K562 (cell line): ENCODE measurements at regions of chr1 and their contacts with region 1.

Region 1: GRCh38 chr1:182301467-182302198 is 90.0 kb downstream of the GLUL start:
- DNase-seq: peak; percentile 53 to 87 (median 62)
- ATAC-seq: peak; percentile 76
- H3K4me3 ChIP-seq: no peak overlapping the region
- H3K27ac ChIP-seq: peak overlapping the region; percentile 95
- H3K4me1 ChIP-seq: peaks cover 37 to 61% of the 10 kb centered on the region in 2 experiments
- H3K27me3 ChIP-seq: no peaks in the 10 kb centered on the region
- CTCF ChIP-seq: peak; percentile 62 to 85 (median 65)
- EP300 ChIP-seq: peak; percentile 69
- POLR2A ChIP-seq: no peak
- RAD21 ChIP-seq: peak; percentile 93 to 98

Region 2: DNA sequence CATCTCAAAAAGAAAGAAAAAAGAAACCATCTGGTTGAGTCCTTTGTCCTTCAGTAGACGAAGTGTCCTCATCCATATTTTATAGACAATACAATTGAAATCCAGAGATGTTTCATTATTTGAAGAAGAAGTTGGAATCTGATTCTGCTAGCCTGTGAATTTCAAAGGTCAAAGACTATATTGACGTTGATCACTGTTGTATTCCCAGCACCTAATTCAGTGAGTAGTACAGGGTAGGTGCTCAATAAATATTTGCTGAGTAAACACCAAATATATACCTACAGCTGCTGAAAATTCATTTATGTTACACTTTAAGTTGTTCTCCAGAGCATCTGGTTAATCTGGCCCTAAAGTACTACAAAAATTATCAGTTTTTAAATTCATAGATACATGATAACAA is 683.1 kb before region 1 on chr1:
- CTCF ChIA-PET with region 1: no interaction called
- POLR2A ChIA-PET with region 1: no interaction called
- in situ Hi-C with region 1: no loop called
- intact Hi-C with region 1: no loop called
- DNase-seq: no peak
- ATAC-seq: no peak
- H3K4me3 ChIP-seq: no peak overlapping the region
- H3K27ac ChIP-seq: no peak overlapping the region
- H3K4me1 ChIP-seq: no peaks in the 10 kb centered on the region
- H3K27me3 ChIP-seq: no peaks in the 10 kb centered on the region; a peak in 1 of 5 replicates
- CTCF ChIP-seq: no peak
- EP300 ChIP-seq: no peak
- POLR2A ChIP-seq: no peak
- RAD21 ChIP-seq: no peak

Region 3: GRCh38 chr1:182175361-182175931 is 126.2 kb before region 1 on chr1:
- CTCF ChIA-PET with region 1: no interaction called
- POLR2A ChIA-PET with region 1: no interaction called
- in situ Hi-C with region 1: no loop called
- intact Hi-C with region 1: no loop called
- DNase-seq: no peak
- ATAC-seq: peak; percentile 25
- H3K4me3 ChIP-seq: no peak overlapping the region
- H3K27ac ChIP-seq: no peak overlapping the region
- H3K4me1 ChIP-seq: peaks cover 0 to 13% of the 10 kb centered on the region in 2 experiments; a peak in 3 of 5 replicates
- H3K27me3 ChIP-seq: peaks cover 4 to 10% of the 10 kb centered on the region in 2 experiments; a peak in 2 of 5 replicates
- CTCF ChIP-seq: no peak
- EP300 ChIP-seq: no peak
- POLR2A ChIP-seq: no peak
- RAD21 ChIP-seq: no peak

Region 4: GRCh38 chr1:182198049-182198501 is 103.6 kb before region 1 on chr1:
- CTCF ChIA-PET with region 1: no interaction called
- POLR2A ChIA-PET with region 1: no interaction called
- in situ Hi-C with region 1: no loop called
- intact Hi-C with region 1: loop called (anchors 1 kb)
- DNase-seq: peak in 3 of 4 experiments; percentile 32 to 49 (median 48)
- ATAC-seq: peak; percentile 78
- H3K4me3 ChIP-seq: no peak overlapping the region
- H3K27ac ChIP-seq: no peak overlapping the region
- H3K4me1 ChIP-seq: peaks cover 0 to 11% of the 10 kb centered on the region in 2 experiments; a peak in 3 of 5 replicates
- H3K27me3 ChIP-seq: no peaks in the 10 kb centered on the region
- CTCF ChIP-seq: peak; percentile 57 to 80 (median 67)
- EP300 ChIP-seq: no peak
- POLR2A ChIP-seq: no peak
- RAD21 ChIP-seq: peak; percentile 60 to 84

Region 5: GRCh38 chr1:182257369-182258063 is 44.1 kb before region 1 on chr1:
- CTCF ChIA-PET with region 1: no interaction called
- POLR2A ChIA-PET with region 1: interaction called, 4 read pairs
- in situ Hi-C with region 1: no loop called
- intact Hi-C with region 1: loop called (anchors 2 kb)
- DNase-seq: peak; percentile 79 to 95 (median 86)
- ATAC-seq: peak; percentile 93
- H3K4me3 ChIP-seq: no peak overlapping the region
- H3K27ac ChIP-seq: peak overlapping the region; percentile 83
- H3K4me1 ChIP-seq: peaks cover 37 to 47% of the 10 kb centered on the region in 2 experiments
- H3K27me3 ChIP-seq: no peaks in the 10 kb centered on the region
- CTCF ChIP-seq: peak in 1 of 3 experiments; percentile 22; a peak in 2 of 6 replicates
- EP300 ChIP-seq: peak; percentile 94
- POLR2A ChIP-seq: no peak
- RAD21 ChIP-seq: peak; percentile 30 to 33; a peak in 3 of 4 replicates

Region 6: GRCh38 chr1:182317611-182318161 is 16.1 kb after region 1 on chr1:
- CTCF ChIA-PET with region 1: no interaction called
- POLR2A ChIA-PET with region 1: interaction called, 10 read pairs
- in situ Hi-C with region 1: no loop called
- intact Hi-C with region 1: no loop called
- DNase-seq: no peak
- ATAC-seq: no peak
- H3K4me3 ChIP-seq: no peak overlapping the region
- H3K27ac ChIP-seq: no peak overlapping the region
- H3K4me1 ChIP-seq: peaks cover 13 to 21% of the 10 kb centered on the region in 2 experiments
- H3K27me3 ChIP-seq: no peaks in the 10 kb centered on the region
- CTCF ChIP-seq: no peak
- EP300 ChIP-seq: no peak
- POLR2A ChIP-seq: no peak
- RAD21 ChIP-seq: no peak

Region 7: DNA sequence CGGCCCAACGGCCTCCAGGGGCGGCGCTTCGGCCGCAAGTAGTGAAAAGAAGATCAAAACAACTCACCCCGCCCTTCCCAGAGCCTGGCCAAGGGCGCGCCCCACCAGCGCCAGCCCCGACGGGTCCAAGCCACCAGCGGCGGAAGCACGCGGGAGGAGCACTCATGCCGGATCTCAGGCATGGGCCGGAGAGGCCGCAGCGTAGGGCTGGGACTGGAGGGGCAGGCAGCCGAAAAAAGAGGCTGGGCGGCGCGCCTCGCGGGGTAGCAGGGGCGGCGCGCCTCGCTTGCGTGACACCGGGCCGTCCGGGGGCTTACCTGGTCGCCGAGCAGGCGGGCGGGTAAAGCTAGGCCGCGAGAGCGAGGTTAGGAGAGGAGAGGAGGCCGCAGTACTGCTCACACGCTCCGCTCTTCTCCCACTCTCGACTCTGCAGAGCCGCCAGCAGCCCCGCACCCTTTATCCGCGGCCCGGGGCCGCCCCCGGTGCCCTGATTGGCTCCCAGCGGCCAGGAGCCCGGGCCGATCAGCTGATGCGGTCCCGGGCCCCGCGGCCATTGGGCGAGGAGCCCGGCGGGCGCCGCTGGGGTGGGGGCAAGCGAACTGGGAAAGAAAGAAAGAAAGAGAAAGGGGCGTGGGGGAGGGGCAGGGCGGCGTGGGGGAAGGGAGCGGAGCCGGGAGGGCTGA is 89.9 kb after region 1 on chr1 and contains the start of gene GLUL:
- CTCF ChIA-PET with region 1: interaction called, 7 read pairs
- POLR2A ChIA-PET with region 1: interaction called, 6 read pairs
- in situ Hi-C with region 1: loop called (anchors 5 kb)
- intact Hi-C with region 1: loop called (anchors 1 kb)
- DNase-seq: peak; percentile 97 to 99 (median 98)
- ATAC-seq: peak; percentile 89
- H3K4me3 ChIP-seq: peak within 1 kb of the TSS; percentile 77
- H3K27ac ChIP-seq: peak within 1 kb of the TSS; percentile 92
- H3K4me1 ChIP-seq: peaks cover 24 to 52% of the 10 kb centered on the region in 2 experiments
- H3K27me3 ChIP-seq: no peaks in the 10 kb centered on the region
- CTCF ChIP-seq: peak in 1 of 3 experiments; percentile 60; a peak in 3 of 6 replicates
- EP300 ChIP-seq: no peak
- POLR2A ChIP-seq: peak; percentile 100
- RAD21 ChIP-seq: peak; percentile 26 to 37; a peak in 3 of 4 replicates
- polyA plus RNA-seq, gene GLUL: 3,526 to 4,222 TPM

Region 8: GRCh38 chr1:182446033-182446669 is 144.5 kb after region 1 on chr1:
- CTCF ChIA-PET with region 1: no interaction called
- POLR2A ChIA-PET with region 1: no interaction called
- in situ Hi-C with region 1: no loop called
- intact Hi-C with region 1: loop called (anchors 1 kb)
- DNase-seq: peak; percentile 63 to 77 (median 69)
- ATAC-seq: peak; percentile 89
- H3K4me3 ChIP-seq: no peak overlapping the region
- H3K27ac ChIP-seq: no peak overlapping the region
- H3K4me1 ChIP-seq: no peaks in the 10 kb centered on the region; a peak in 1 of 5 replicates
- H3K27me3 ChIP-seq: peaks cover 0 to 6% of the 10 kb centered on the region in 2 experiments; a peak in 3 of 5 replicates
- CTCF ChIP-seq: peak; percentile 74 to 89 (median 81)
- EP300 ChIP-seq: no peak
- POLR2A ChIP-seq: no peak
- RAD21 ChIP-seq: peak; percentile 90 to 98

Region 9: DNA sequence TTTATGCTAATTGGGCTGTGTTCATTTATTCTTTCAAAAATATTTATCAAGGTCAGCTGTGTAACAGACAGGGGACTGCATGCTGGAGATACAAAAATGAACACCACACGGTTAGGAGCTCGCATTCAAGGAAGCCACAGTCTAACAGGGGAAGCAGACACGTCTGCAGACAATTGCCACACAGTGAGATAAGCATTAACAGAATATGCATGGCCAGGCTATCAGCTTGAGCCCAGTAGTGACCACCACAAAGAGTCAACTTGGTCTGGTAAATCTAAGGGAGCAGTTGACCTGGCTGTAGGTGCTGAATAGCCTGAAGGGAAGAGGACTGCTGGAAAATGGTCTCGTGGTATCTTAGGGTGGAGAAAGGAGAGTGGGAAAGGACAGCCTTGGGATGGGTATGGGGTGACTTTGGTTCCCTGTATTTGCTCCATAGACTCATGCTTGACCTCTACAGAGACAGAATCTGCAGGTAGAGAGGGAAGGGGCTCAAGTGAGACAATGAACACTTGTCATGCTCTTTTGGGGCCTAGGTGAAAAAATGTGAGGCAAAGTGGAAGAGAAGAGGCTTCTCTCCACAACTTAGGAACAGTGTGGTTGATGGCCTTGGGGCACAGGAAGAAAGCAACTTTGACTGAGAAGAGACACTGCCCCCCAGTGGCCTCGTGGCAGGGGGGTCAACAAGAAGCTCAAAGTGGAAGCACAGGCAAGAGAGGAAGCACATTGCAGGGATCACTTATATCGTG is 480.4 kb after region 1 on chr1:
- CTCF ChIA-PET with region 1: no interaction called
- POLR2A ChIA-PET with region 1: no interaction called
- in situ Hi-C with region 1: no loop called
- intact Hi-C with region 1: loop called (anchors 5 kb)
- DNase-seq: peak; percentile 59 to 84 (median 70)
- ATAC-seq: peak; percentile 86
- H3K4me3 ChIP-seq: no peak overlapping the region
- H3K27ac ChIP-seq: no peak overlapping the region
- H3K4me1 ChIP-seq: peaks cover 0 to 20% of the 10 kb centered on the region in 2 experiments; a peak in 2 of 5 replicates
- H3K27me3 ChIP-seq: peaks cover 0 to 2% of the 10 kb centered on the region in 2 experiments; a peak in 3 of 5 replicates
- CTCF ChIP-seq: peak; percentile 87 to 93 (median 91)
- EP300 ChIP-seq: no peak
- POLR2A ChIP-seq: no peak
- RAD21 ChIP-seq: peak; percentile 93 to 97